A673 (cell line): ENCODE measurements at regions of chr1 and their contacts with region 1.

Region 1: DNA sequence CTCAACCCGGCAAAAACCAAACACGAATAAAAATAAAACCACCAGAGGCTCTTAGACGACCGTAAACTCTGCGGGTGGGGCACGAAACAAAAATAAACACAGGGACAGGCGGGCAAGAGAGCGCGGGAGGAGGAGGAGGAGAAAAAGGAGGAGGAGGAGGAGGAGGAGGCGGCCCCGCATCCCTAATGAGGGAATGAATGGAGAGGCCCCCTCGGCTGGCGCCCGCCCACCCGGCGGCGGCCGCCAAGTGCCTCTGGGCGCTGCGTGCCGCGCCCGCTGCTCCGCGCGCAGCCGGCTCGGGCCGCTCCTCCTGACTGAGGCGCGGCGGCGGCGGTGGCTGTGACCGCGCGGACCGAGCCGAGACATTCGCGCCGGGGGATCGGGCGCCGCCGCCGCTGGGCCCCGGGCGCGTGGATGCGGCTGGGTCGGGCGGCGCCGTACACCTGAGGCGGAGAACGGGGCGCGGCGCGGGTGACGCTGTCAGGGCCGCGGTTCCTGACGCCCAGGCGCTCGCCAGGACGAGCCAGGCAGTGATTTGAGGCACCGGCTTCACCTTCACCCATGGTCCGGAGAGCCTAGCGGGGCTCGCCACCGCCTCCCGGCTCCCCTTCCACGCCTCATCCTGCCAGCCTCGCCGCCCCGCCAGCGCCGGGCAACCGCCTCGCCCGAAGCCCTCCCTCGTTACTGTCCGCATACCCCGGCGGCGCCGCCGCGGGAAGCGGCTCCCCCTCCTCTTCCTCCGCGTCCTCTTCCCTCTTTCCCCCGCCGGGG is at the start of gene MARK1:
- DNase-seq: peak; percentile 62
- H3K4me3 ChIP-seq: peak within 1 kb of the TSS; percentile 54
- H3K27ac ChIP-seq: no peak within 1 kb of the TSS
- H3K4me1 ChIP-seq: peaks cover 4% of the 10 kb centered on the region
- H3K27me3 ChIP-seq: peaks cover 93% of the 10 kb centered on the region
- CTCF ChIP-seq: no peak
- total RNA-seq, gene MARK1: 5.1 and 6.9 TPM in 2 replicates

Region 2: GRCh38 chr1:220294846-220295301 is 233.2 kb before region 1 on chr1:
- CTCF ChIA-PET with region 1: no interaction called
- POLR2A ChIA-PET with region 1: no interaction called
- intact Hi-C with region 1: loop called (anchors 5 kb)
- DNase-seq: no peak
- H3K4me3 ChIP-seq: no peak overlapping the region
- H3K27ac ChIP-seq: no peak overlapping the region
- H3K4me1 ChIP-seq: no peaks in the 10 kb centered on the region
- H3K27me3 ChIP-seq: peaks cover 8% of the 10 kb centered on the region
- CTCF ChIP-seq: no peak

Region 3: DNA sequence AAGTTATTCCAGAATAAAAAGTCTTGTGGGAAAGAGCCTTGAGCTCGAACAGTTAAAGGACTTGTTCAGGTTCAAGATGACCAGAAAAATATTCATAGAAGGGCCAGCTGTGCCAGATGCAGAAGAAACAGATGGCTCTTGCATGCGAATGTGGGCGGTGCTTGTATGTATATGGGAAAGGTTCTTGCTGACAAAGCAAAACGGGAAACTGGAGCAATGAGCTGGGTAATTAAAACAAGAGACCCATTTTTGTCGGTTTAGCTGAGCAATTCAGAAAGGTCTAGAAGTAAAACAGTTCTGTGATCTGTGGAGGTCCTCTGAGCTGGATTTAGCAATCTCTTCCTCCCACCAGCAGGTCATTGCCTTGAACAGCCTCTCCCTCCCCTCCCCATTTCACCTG is 107.4 kb before region 1 on chr1:
- CTCF ChIA-PET with region 1: no interaction called
- POLR2A ChIA-PET with region 1: no interaction called
- intact Hi-C with region 1: loop called (anchors 5 kb)
- DNase-seq: peak; percentile 35
- H3K4me3 ChIP-seq: no peak overlapping the region
- H3K27ac ChIP-seq: no peak overlapping the region
- H3K4me1 ChIP-seq: peaks cover 9% of the 10 kb centered on the region
- H3K27me3 ChIP-seq: no peaks in the 10 kb centered on the region
- CTCF ChIP-seq: no peak

Region 4: DNA sequence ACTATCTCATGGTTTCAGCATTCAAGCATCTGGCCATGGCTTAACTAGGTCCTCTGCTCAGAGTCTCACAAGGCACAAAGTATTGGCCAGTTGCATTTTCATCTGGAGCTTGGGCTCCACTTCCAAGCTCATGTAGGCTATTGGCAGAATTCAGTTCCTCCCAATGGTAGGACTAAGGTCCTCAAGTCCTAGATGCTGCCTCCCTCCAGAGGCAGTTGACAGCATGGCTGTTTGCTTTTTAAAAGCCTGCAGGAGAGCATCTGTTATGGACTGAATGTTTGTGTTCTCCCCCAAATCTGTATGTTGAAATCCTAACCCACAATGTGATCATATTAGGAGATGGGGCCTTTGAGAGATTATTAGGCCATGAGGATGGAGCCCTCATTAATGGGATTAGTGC is 313.2 kb after region 1 on chr1:
- CTCF ChIA-PET with region 1: no interaction called
- POLR2A ChIA-PET with region 1: no interaction called
- intact Hi-C with region 1: no loop called
- DNase-seq: no peak
- H3K4me3 ChIP-seq: no peak overlapping the region
- H3K27ac ChIP-seq: no peak overlapping the region
- H3K4me1 ChIP-seq: no peaks in the 10 kb centered on the region
- H3K27me3 ChIP-seq: no peaks in the 10 kb centered on the region
- CTCF ChIP-seq: no peak